ENCODE measurements at regions of chr10 and their contacts with region 1.

Region 1: DNA sequence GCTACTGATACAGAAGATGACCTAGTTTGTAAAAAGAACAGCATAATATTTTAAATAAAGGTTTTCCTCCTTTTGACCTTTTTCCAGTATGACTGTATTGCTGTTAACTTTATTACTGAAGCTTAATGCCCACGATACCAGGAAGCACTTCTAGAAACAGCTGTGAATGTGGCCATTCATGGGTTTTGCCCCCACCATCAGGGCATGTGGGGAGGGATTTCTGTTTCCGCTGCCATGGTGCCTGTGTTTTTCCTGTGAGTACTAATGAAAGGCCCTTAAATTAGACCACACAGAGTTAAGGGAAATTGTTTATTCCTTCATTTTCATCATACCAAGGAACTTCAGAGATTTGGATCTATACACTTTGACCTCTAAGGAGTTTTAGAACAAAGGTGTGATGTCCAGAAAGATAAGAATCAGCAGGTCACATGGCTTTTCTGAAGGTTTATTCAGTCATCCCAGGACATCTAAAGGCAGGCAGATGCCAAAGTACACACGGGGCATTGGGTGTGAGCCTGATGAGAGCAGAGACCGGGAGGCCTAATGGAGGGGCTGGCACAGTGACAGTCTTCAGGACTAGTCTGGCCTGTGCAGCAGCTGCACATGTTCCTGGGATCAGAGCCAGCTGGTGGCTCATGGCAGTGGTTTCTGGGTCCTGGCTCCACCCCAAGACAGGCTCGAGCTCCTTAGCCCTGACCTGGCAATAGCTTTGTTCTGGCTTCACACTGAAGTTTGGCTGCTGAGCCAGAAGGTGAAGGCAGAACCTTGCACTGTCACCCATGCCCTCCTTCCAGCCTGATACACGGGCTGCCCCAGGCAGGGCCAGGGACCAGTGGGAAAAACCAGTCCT is 190.9 kb downstream of the REEP3 start:
- DNase-seq: peak; percentile 94 to 97
- ATAC-seq: peak; percentile 84
- H3K4me3 ChIP-seq: no peak overlapping the region
- H3K27ac ChIP-seq: peak overlapping the region; percentile 81 to 88 (median 85)
- H3K4me1 ChIP-seq: peaks cover 34 to 49% of the 10 kb centered on the region in 2 donors
- H3K27me3 ChIP-seq: no peaks in the 10 kb centered on the region
- CTCF ChIP-seq: no peak
- POLR2A ChIP-seq: no peak

Region 2: DNA sequence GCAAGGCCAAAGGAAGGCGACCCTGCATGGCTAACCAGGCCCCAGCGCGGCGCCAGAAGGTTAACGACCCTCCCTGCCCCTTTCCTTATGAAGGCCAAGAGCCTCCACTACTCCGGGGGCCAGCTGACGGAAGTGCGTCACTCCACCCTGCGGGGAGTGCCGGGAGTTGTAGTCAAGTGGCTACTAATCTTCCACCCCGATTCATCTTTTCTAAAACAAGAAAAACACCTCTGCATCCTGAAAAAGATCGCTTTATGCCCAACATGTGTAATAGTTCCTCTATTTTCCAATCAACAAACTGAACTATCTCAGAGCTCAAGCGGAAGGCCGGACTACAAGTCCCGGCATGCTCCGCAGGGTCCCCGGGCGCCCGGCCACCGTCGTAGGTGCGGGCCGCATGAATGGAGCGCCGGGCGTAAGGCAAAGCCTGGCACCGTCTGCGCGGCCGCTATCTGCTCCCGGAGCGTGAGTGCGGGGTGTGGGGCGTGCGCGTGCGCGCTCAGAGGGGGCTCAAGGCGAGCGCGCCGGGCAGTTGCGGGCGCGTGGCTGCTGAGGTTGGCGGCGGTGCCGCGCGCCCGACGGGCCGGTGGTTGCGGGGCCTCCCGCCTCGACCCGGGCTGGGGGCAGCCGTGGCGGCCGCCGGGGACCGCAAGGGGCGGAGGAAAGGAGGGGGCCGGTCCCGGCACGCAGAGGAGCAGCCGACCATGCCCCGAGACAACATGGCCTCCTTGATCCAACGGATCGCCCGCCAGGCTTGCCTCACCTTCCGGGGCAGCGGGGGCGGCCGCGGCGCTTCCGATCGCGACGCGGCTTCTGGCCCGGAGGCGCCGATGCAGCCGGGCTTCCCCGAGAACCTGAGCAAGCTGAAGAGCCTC is 907.5 kb before region 1 on chr10 and contains the start of gene ADO:
- in situ Hi-C with region 1: no loop called
- intact Hi-C with region 1: loop called (anchors 10 kb)
- DNase-seq: peak; percentile 75 to 88
- ATAC-seq: peak; percentile 93
- H3K4me3 ChIP-seq: peak within 1 kb of the TSS; percentile 69 to 86 (median 78)
- H3K27ac ChIP-seq: peak within 1 kb of the TSS; percentile 86 to 98 (median 95)
- H3K4me1 ChIP-seq: peaks cover 31 to 39% of the 10 kb centered on the region in 2 donors
- H3K27me3 ChIP-seq: peaks cover 0 to 3% (median 0%) of the 10 kb centered on the region in 3 donors
- CTCF ChIP-seq: no peak
- POLR2A ChIP-seq: peak; percentile 72 to 82
- total RNA-seq, gene ADO: 11.6 to 31.6 (median 27.1) TPM

Region 3: DNA sequence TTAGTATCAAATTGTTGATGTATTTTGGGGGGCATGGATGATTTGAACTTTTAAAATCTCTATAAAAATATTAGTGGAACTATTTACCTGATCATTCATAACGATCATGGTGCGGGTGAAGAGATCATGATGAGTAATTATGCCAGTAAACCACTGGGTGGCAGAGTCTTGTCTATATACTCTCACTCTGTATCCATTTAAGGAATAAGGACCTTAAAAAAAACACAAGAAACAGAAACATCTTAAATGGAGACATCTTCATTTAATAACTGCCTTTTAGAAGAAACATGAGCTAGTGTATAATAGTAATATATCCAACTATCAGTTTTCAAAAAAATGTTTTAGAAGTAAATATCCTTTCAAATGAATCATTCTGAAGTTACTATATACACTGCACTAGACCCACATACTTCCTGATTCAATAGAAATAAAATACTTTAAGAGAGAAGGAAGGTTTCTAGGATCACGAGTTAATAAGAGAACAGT is 494.9 kb before region 1 on chr10:
- in situ Hi-C with region 1: loop called in 3 of 4 experiments (anchors 5 to 25 kb)
- intact Hi-C with region 1: no loop called
- DNase-seq: no peak
- ATAC-seq: peak; percentile 78 to 90
- H3K4me3 ChIP-seq: no peak overlapping the region
- H3K27ac ChIP-seq: peak overlapping the region in 3 of 4 donors; percentile 10 to 24 (median 23)
- H3K4me1 ChIP-seq: peaks cover 0 to 26% of the 10 kb centered on the region in 2 donors
- H3K27me3 ChIP-seq: no peaks in the 10 kb centered on the region
- CTCF ChIP-seq: peak; percentile 62 to 79 (median 67)
- POLR2A ChIP-seq: no peak

Region 4: DNA sequence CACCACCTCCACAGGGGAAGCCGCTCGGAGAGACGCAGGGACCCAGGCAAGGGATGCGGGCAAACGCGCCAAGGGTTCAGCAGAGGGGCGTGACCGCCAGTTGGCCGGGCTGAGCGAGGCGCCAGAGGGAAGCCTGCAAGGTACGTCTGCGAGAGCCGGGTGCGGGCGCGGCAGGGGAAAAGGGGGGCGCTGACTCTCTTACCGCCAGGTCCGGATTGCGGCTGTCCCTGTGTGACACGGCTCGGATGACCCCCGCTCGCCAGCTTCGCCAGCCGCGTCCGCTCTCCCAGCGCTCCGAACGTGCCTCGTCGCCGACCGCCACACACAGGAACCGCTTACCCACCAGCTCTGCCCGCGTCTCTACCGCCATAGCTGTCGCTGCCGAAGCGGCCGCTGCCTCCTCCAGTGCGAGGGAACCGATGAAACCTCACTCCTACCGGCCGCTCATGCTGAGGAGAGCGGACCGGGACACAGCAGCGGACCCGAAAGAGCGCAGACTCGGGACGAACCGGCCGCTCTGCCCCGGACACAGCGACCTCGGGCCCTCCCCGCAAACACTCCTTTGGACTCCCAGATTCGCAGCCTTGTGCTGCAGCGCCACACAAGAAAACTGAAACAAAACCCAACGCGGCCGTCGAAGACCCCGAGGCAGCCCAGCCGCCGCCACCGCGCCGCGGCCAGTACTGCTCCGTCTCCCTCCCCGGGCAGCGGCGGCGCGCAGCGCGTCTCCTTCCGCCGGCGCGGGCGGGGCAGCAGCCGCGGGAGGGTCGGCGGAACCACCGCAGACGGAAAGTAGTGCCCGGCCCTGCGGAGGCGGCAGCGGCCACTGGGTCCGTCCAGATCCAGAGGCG is 246.6 kb before region 1 on chr10 and contains the start of gene JMJD1C:
- in situ Hi-C with region 1: loop called in 1 of 4 experiments (anchors 10 kb)
- intact Hi-C with region 1: loop called (anchors 2 kb)
- DNase-seq: peak; percentile 48 to 78
- ATAC-seq: peak; percentile 84 to 88
- H3K4me3 ChIP-seq: peak within 1 kb of the TSS; percentile 82 to 95 (median 92)
- H3K27ac ChIP-seq: peak within 1 kb of the TSS; percentile 93 to 95 (median 94)
- H3K4me1 ChIP-seq: peaks cover 26% of the 10 kb centered on the region in 2 donors
- H3K27me3 ChIP-seq: no peaks in the 10 kb centered on the region
- CTCF ChIP-seq: peak in 2 of 5 experiments; percentile 13 to 20
- POLR2A ChIP-seq: peak; percentile 79 to 82
- total RNA-seq, gene JMJD1C: 22.5 to 74.1 (median 46.9) TPM

Region 5: DNA sequence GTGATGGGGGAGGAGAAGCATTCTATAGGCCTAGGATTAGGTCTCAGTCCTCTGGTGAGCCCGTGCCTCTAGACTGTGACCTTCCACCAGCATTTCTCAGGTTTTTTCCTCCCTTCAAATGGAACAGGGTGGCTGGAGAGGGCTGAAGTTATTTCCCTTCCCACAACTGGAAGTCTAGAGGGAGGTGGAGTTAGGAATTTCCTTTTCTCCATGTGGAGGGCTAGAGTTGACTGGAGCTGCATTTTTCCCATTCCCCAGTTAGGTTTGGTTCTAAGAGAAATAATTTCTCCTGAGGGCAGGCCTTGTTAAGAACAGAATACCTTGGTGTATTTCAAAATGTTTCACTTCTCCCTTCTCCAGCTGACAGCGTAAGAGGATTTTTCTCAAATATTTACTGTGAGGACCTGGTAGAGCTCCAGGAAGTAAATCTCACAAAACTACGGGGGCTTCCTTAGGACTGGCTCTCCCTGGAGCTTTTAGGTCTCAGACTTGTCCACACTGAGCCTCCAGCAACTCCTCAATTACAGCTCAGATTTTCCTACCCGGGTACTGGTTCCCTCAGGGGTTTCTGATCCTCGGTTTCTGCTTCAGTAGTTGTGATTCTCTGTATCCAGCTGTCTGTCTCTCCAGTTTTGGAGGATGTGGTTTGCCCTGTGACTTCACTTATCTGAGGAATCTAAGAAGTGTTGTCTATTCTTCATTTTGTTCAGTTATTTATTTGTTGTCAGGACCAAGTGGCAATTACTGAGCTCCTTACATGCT is 196.9 kb before region 1 on chr10:
- in situ Hi-C with region 1: loop called in 3 of 4 experiments (anchors 5 to 25 kb)
- intact Hi-C with region 1: loop called (anchors 2 kb)
- DNase-seq: no peak
- ATAC-seq: no peak
- H3K4me3 ChIP-seq: peak overlapping the region in 1 of 4 donors; percentile 15
- H3K27ac ChIP-seq: peak overlapping the region; percentile 34 to 68 (median 63)
- H3K4me1 ChIP-seq: peaks cover 47 to 56% of the 10 kb centered on the region in 2 donors
- H3K27me3 ChIP-seq: no peaks in the 10 kb centered on the region
- CTCF ChIP-seq: no peak
- POLR2A ChIP-seq: no peak

Region 6: DNA sequence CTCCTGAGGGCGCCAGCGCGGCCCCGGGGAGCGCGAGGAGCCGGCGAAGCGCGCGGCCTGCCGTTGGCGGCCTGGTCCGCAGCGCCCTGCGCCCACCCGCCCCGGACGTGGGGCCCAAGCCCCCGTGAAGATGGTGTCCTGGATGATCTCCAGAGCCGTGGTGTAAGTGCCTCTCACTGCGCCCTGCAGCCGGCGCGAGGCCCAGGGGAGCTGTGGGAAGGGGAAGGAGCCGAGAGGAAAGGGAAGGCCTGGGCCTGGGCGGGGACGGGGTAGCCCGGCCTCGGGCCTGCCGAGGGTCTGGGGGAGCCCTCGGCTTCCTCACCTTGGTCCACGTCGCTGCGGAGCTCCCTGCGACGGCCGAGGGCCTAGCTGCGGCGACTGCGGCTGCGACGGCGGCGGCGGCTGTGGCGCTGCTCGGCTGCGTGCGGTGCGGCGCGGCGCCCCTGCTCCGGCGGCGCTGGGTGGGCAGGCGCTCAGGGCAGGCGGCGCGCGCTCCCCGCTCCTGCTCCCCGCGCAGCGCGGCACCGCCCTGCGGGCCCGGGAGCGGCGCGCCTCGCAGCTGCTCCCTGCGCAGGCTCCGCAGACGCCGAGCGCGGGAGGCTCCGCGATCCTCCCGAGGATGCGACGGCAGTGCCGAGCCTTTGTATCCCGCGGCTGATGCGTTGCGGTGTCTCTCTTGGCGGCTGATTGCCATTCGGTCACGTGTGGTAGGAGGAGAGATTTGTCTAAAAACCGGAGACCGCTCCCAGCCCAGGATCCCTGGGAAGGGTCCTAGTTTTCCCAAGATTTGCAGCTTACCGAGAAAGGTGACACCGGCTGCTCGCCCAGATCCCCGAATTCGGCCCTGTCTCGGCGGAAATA is 190.4 kb before region 1 on chr10:
- in situ Hi-C with region 1: loop called in 3 of 4 experiments (anchors 5 to 25 kb)
- intact Hi-C with region 1: loop called (anchors 2 kb)
- DNase-seq: peak; percentile 42 to 64
- ATAC-seq: peak; percentile 81 to 86
- H3K4me3 ChIP-seq: peak overlapping the region; percentile 73 to 88 (median 80)
- H3K27ac ChIP-seq: peak overlapping the region; percentile 95 to 98 (median 98)
- H3K4me1 ChIP-seq: peaks cover 51 to 52% of the 10 kb centered on the region in 2 donors
- H3K27me3 ChIP-seq: no peaks in the 10 kb centered on the region
- CTCF ChIP-seq: peak in 1 of 5 experiments; percentile 6
- POLR2A ChIP-seq: peak; percentile 77 to 81

Region 7: GRCh38 chr10:63622097-63622496 is 90.0 kb before region 1 on chr10:
- in situ Hi-C with region 1: loop called in 1 of 4 experiments (anchors 5 kb)
- intact Hi-C with region 1: no loop called
- DNase-seq: no peak
- ATAC-seq: no peak
- H3K4me3 ChIP-seq: no peak overlapping the region
- H3K27ac ChIP-seq: no peak overlapping the region
- H3K4me1 ChIP-seq: no peaks in the 10 kb centered on the region
- H3K27me3 ChIP-seq: no peaks in the 10 kb centered on the region
- CTCF ChIP-seq: no peak
- POLR2A ChIP-seq: no peak

Measured in gastrocnemius medialis (tissue), 4 donors.